ENCODE measurements at regions of chr20 and their contacts with region 1.

Region 1: DNA sequence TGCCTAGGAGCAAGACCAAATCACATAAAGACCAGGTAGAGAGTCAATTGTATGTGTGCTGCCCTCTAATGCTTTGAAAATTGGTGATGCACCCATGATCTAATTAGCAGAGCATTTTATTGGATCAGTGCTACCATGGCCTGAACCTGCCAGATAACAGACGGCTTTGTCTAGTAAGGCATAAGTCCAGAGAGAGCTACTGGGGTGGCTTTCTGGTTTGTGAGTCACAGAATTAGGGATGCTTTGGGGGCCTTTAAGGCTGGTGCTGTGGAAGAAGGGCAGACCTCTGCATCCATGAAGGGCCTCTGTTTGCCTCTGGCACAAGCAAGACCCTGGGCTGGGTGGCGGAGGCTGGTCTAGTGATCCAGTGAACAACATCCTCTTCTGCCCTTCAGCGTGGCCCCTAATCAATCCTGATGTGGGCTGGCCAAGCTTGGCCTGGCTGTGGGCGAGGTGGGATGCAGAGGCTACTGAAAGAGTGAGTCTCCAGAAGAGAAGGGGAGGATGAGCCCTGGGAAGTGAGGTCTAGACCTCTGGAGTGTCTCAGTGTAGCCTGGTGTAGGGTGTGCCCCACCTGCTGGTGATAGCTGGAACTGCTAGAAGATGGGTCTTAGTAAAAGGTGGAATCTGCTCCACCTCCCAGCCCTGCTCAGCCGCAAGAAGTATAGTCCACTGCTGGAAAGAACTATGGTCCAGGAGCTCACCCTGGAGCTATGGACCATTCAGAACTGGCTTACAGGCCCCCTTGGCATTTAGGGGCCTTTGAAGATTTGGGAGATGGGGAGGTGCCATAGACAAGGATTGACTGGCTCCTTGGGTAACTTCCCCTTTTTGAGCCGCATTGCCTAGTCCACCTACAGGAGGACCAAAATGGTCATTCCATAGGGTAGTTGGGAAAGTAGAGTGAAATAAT is 36.7 kb upstream of the AAR2 start:
- DNase-seq: peak; percentile 66 to 87
- ATAC-seq: peak; percentile 83

Region 2: GRCh38 chr20:36154700-36155628 is 44.6 kb before region 1 on chr20 and contains the start of gene EPB41L1:
- intact Hi-C with region 1: loop called in 1 of 2 experiments (anchors 5 kb)
- DNase-seq: no peak
- ATAC-seq: no peak
- total RNA-seq, gene EPB41L1: 60.6 to 63.1 TPM

Region 3: DNA sequence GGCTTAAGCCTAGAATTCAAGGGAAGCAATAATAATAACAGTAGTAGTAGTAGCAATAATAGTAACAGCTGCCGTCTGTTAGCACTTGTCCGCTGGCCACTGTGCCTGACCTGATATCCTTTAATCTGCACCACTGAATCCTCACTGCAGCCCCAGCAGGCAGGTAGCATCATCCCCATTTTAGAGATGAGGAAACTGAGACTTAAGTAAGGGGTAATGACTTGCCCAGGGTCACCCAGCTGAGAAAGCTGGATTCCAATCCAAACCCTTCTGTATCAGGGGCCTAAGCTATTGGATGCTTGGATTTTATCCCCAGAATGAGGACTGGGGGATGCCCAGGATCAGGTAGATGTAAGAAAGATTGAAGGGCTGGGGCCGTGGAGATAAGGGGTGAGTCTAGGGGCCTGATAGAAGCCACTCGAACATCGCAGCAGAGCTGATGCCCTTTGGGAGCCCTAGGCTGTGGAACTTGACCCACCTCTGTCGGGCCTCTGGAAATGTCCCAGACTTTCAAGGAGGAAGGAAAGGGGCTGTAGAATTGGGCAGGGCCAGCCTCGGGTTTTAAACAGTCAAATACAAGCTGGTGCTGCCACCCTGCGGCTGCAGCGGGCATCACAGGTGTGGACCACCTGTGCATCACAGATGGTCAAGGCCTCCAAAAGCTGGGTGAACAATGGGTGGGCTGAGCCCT is 239.6 kb after region 1 on chr20:
- intact Hi-C with region 1: loop called in 1 of 2 experiments (anchors 10 kb)
- DNase-seq: peak; percentile 41 to 68
- ATAC-seq: peak; percentile 67